Activated CD4-positive, alpha-beta memory T cell treated with anti-CD3 and anti-CD28 coated beads for 36 hours (primary cell): ENCODE measurements at regions of chr9 and their contacts with region 1.

Region 1: GRCh38 chr9:114434878-114435311 is 47.1 kb upstream of the AKNA start:
- DNase-seq: peak; percentile 17
- H3K4me3 Mint-ChIP-seq: no peak overlapping the region
- H3K27ac Mint-ChIP-seq: no peak overlapping the region
- H3K4me1 Mint-ChIP-seq: peaks cover 3% of the 10 kb centered on the region
- H3K27me3 Mint-ChIP-seq: no peaks in the 10 kb centered on the region

Region 2: DNA sequence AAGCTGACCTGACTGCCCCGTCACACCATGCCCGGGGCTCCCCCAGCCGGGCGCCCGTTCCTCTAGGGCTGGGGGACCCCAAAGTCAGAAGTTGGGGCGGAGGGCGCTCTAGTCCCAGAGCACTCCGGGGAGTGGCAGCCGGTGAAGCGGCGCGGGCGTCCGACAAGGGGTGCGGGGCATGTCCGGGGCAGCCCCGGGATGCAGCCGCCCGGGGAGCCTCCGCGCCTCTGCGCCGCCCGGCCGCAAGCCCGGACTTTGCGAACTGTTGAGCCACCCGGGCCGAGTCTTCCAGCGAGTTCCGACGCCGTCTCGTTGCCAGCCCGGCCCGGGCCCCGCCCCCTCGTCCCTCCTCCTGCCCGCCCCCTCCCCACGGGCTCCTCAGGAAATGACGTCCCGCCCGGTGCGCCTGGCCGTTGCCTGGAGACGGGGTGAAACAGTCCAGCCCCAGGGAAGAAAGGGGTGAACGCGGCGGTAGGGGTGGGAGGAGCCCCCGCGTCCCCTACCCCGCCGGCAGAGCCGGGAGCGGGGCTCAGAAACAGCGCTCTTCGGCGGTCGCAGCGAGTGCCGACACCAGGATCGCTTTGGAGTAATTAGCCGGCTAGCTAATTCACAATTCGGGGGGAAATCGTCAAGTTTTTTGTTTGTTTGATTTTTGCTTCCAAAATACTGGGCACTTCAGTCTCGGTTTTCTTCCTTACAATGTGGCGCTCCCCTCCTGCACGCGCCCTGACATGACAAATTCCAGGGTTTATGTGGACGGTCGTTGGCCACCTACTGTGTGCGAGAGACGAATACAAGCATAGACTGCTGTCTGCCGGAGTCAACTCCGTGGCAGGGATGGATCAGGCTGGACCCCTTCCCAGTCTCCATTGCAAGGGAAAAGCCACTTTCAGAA is 70.5 kb after region 1 on chr9 and contains the start of gene WHRN:
- CTCF ChIA-PET with region 1: interaction called, 6 read pairs
- POLR2A ChIA-PET with region 1: no interaction called
- intact Hi-C with region 1: loop called (anchors 5 kb)
- DNase-seq: peak; percentile 93
- H3K4me3 Mint-ChIP-seq: peak within 1 kb of the TSS; percentile 76
- H3K27ac Mint-ChIP-seq: peak within 1 kb of the TSS; percentile 42
- H3K4me1 Mint-ChIP-seq: peaks cover 24% of the 10 kb centered on the region
- H3K27me3 Mint-ChIP-seq: peaks cover 17% of the 10 kb centered on the region
- total RNA-seq, gene WHRN: 2.8 to 4.4 TPM